ENCODE measurements at regions of chr4 and their contacts with region 1.

Region 1: GRCh38 chr4:40672536-40673526 is 43.2 kb upstream of the RBM47 start:
- DNase-seq: peak; percentile 62
- CTCF ChIP-seq: no peak

Region 2: GRCh38 chr4:40685300-40685699 is 12.5 kb after region 1 on chr4:
- CTCF ChIA-PET with region 1: interaction called, 33 read pairs
- POLR2A ChIA-PET with region 1: no interaction called
- DNase-seq: no peak
- CTCF ChIP-seq: no peak

Region 3: GRCh38 chr4:40702551-40703151 is 29.8 kb after region 1 on chr4:
- CTCF ChIA-PET with region 1: no interaction called
- POLR2A ChIA-PET with region 1: no interaction called
- DNase-seq: no peak
- CTCF ChIP-seq: no peak